ENCODE measurements at regions of chr18 and their contacts with region 1.

Region 1: GRCh38 chr18:13611601-13612195 is 114.7 kb downstream of the FAM210A start:
- DNase-seq: peak; percentile 64
- ATAC-seq: peak; percentile 10
- H3K4me3 Mint-ChIP-seq: peak overlapping the region; percentile 92
- H3K27ac Mint-ChIP-seq: peak overlapping the region; percentile 99
- H3K4me1 Mint-ChIP-seq: peaks cover 81% of the 10 kb centered on the region
- H3K27me3 Mint-ChIP-seq: no peaks in the 10 kb centered on the region

Region 2: DNA sequence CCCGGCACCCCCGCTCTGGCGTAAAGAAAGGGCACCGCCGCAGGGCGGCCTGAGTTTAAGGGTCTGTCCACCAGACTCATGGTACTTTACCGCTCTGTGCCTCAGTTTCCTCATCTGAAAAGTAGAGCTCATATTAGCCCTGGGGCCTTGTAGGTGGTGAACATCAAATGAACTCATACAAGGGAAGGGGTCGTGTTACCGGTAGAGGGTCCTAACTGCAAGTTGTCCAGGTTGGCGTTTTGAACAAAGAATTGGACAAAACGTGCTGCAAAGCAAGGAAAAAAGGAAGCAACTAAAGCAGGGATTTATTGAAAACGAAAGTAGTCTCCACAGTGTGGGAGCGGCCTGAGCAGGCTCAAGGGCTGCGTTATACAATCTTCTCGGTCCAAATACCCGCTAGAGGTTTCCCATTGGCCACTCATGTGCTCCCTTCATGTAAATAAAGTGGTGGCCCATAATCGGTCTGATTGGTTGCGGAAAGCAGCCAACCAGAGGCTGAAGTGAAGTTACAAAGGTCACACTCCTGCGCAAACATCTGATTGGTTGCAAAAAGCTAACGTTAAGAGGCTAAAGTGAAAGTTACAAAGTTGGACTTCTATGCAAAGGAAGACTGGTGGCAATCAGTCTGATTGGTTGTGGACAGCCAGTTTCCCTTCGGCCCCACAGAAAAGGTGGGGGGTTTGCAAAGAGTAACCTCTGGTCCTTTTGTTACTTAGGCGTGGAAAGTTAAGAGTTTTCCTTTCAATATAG is 473.9 kb before region 1 on chr18:
- POLR2A ChIA-PET with region 1: interaction called, 12 read pairs
- DNase-seq: peak; percentile 66
- ATAC-seq: peak; percentile 92
- H3K4me3 Mint-ChIP-seq: peak overlapping the region; percentile 98
- H3K27ac Mint-ChIP-seq: peak overlapping the region; percentile 98
- H3K4me1 Mint-ChIP-seq: peaks cover 26% of the 10 kb centered on the region
- H3K27me3 Mint-ChIP-seq: no peaks in the 10 kb centered on the region

Region 3: GRCh38 chr18:13452388-13452811 is 159.3 kb before region 1 on chr18:
- POLR2A ChIA-PET with region 1: no interaction called
- DNase-seq: no peak
- ATAC-seq: no peak
- H3K4me3 Mint-ChIP-seq: no peak overlapping the region
- H3K27ac Mint-ChIP-seq: no peak overlapping the region
- H3K4me1 Mint-ChIP-seq: peaks cover 38% of the 10 kb centered on the region
- H3K27me3 Mint-ChIP-seq: no peaks in the 10 kb centered on the region

Region 4: DNA sequence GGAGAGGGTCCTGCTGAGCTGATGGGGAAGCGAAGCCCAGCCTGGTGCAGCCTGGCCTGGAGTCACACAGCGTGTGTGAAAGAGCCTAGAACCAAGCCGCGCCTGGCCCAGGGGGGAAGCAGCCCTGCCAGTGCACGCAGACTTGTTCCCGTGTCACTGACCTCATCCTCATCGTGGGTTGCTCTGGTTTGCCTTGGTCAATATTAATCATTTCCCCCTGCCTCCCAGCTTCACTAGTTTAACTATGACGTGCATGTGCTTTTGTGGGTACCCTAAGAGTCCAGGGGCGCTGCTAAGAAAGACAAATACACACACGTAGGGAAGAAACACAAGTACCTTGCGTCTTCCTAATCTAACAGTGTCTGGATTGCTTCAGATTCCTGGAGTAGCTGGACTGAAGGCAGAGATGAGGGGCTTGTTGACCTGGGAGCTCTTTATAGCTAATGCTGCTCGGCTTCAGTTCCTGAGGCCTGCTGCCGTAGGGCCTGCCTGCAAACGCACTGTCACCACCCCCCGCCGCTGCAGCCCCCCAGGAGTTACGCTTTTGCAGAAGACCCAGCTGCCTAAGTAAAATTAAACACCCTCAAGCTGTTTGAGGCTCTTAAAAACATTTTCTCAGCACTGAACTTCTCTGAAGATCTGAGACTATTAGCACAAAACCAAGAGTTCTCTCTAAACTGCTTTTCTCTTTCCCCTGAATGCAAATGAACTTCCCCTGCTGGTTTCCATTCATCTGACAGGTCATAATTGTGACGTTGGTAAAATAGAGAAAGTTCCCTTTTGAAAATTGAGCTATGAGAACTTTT is 44.6 kb before region 1 on chr18:
- POLR2A ChIA-PET with region 1: interaction called, 23 read pairs
- DNase-seq: peak; percentile 51
- ATAC-seq: peak; percentile 35
- H3K4me3 Mint-ChIP-seq: peak overlapping the region; percentile 80
- H3K27ac Mint-ChIP-seq: peak overlapping the region; percentile 95
- H3K4me1 Mint-ChIP-seq: peaks cover 72% of the 10 kb centered on the region
- H3K27me3 Mint-ChIP-seq: no peaks in the 10 kb centered on the region

Region 5: DNA sequence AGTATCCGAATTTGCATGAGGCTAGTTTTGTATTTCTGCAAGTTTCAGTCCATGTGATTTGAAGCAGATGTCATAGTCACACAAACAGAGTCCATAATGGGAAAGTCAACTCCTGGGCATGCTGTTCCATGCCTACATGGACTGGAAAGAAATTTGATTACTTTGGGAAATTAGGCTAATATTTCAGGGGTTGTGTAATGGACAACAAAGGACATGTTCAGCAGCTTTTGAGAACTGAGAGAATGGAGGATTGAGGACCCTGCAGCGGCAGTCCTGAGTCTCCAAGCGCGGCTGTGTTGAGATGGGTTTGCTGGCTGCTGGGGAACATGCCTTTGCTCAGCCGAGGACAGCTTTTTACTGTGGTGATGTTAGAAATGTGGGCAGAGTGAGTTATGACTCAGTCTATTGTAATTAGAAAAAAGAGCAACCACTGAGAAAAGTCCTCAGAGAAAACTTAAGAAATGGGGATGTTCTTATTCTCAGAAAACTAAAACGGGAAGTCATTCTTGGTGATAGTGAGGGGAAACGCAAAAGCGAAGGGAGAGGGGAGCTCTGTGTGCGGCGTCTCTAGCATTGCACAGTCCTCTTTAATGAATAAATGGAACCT is 34.5 kb before region 1 on chr18:
- POLR2A ChIA-PET with region 1: interaction called, 117 read pairs
- DNase-seq: no peak
- ATAC-seq: peak; percentile 89
- H3K4me3 Mint-ChIP-seq: peak overlapping the region; percentile 62
- H3K27ac Mint-ChIP-seq: peak overlapping the region; percentile 79
- H3K4me1 Mint-ChIP-seq: peaks cover 59% of the 10 kb centered on the region
- H3K27me3 Mint-ChIP-seq: no peaks in the 10 kb centered on the region

Region 6: GRCh38 chr18:13629841-13630715 is 18.4 kb after region 1 on chr18:
- POLR2A ChIA-PET with region 1: interaction called, 17 read pairs
- DNase-seq: no peak
- ATAC-seq: peak; percentile 87
- H3K4me3 Mint-ChIP-seq: no peak overlapping the region
- H3K27ac Mint-ChIP-seq: peak overlapping the region; percentile 66
- H3K4me1 Mint-ChIP-seq: peaks cover 32% of the 10 kb centered on the region
- H3K27me3 Mint-ChIP-seq: no peaks in the 10 kb centered on the region

Region 7: GRCh38 chr18:13756261-13756660 is 144.6 kb after region 1 on chr18:
- POLR2A ChIA-PET with region 1: no interaction called
- DNase-seq: no peak
- ATAC-seq: no peak
- H3K4me3 Mint-ChIP-seq: no peak overlapping the region
- H3K27ac Mint-ChIP-seq: no peak overlapping the region
- H3K4me1 Mint-ChIP-seq: peaks cover 1% of the 10 kb centered on the region
- H3K27me3 Mint-ChIP-seq: no peaks in the 10 kb centered on the region

Measured in activated naive CD8-positive, alpha-beta T cell treated with anti-CD3 and anti-CD28 coated beads, Interleukin-2, amount 10 ng/mL, durations not matched to agents 7 days and 5 days (primary cell).